Testis (tissue), 5 donors: ENCODE measurements at regions of chr6 and their contacts with region 1.

Region 1: DNA sequence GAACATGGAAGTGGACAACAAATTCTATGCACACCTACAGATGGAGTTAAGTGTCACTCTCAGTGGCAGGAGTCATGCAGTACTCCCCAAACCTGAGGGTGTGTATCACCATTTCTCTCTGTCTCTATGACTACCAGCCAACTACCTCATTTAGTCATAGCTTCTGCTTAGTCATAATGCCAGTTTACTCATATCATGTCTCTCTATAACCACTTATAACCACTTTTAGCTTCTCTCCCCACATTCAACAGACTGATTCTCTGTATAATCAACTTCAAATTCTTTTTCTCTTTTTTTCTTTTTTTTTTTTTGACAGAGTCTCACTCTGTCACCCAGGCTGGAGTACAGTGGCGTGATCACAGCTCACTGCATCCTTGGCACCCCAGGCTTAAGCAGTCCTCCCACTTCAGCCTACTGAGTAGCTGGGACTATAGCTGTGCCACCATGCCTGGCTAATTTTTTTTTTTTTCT is 13.8 kb upstream of the GTF3C6 start:
- DNase-seq: no peak
- H3K4me3 ChIP-seq: no peak overlapping the region
- H3K27ac ChIP-seq: no peak overlapping the region
- H3K4me1 ChIP-seq: no peaks in the 10 kb centered on the region
- H3K27me3 ChIP-seq: no peaks in the 10 kb centered on the region
- CTCF ChIP-seq: no peak
- POLR2A ChIP-seq: no peak

Region 2: GRCh38 chr6:110528101-110528929 is 416.4 kb before region 1 on chr6:
- intact Hi-C with region 1: loop called (anchors 10 kb)
- DNase-seq: peak; percentile 80
- H3K4me3 ChIP-seq: no peak overlapping the region
- H3K27ac ChIP-seq: no peak overlapping the region
- H3K4me1 ChIP-seq: no peaks in the 10 kb centered on the region
- H3K27me3 ChIP-seq: no peaks in the 10 kb centered on the region
- CTCF ChIP-seq: peak; percentile 67 to 77 (median 73)
- POLR2A ChIP-seq: no peak

Region 3: DNA sequence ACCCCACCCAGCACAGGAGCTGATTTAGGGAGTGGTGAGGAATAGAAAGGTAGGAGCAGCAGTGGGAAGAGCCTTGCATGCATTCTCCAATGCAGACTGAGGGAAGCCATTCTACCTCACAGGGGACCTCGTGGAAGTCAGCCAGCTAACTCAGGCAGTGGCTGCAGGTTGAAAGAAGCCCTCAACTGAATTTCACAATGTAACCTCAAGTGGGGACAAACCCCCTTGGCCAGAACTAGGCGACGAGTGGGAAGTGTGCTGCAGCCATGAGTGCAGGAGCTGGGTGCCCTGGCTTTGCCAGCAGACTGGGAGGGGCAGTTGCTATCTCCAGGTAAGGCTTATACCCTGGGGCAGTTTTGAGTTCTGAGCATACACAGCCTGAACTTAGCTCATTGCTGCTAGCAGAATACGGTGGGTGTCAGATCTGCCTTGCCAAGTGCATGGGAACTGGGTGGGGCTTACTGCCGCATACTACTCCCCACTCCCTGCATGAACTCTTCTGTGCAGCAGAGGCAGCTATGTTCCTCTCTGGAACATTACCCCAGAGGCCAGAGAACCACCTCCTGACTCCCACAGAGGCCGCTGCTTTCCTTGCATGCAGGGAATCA is 256.0 kb before region 1 on chr6:
- intact Hi-C with region 1: loop called (anchors 5 kb)
- DNase-seq: no peak
- H3K4me3 ChIP-seq: no peak overlapping the region
- H3K27ac ChIP-seq: no peak overlapping the region
- H3K4me1 ChIP-seq: peaks cover 7% of the 10 kb centered on the region
- H3K27me3 ChIP-seq: no peaks in the 10 kb centered on the region
- CTCF ChIP-seq: no peak
- POLR2A ChIP-seq: no peak

Region 4: GRCh38 chr6:110882824-110883554 is 61.7 kb before region 1 on chr6:
- intact Hi-C with region 1: no loop called
- DNase-seq: no peak
- H3K4me3 ChIP-seq: no peak overlapping the region
- H3K27ac ChIP-seq: no peak overlapping the region
- H3K4me1 ChIP-seq: peaks cover 57% of the 10 kb centered on the region
- H3K27me3 ChIP-seq: no peaks in the 10 kb centered on the region
- CTCF ChIP-seq: no peak
- POLR2A ChIP-seq: no peak

Region 5: GRCh38 chr6:111200350-111201243 is 255.9 kb after region 1 on chr6:
- intact Hi-C with region 1: no loop called
- DNase-seq: no peak
- H3K4me3 ChIP-seq: no peak overlapping the region
- H3K27ac ChIP-seq: no peak overlapping the region
- H3K4me1 ChIP-seq: no peaks in the 10 kb centered on the region
- H3K27me3 ChIP-seq: no peaks in the 10 kb centered on the region
- CTCF ChIP-seq: no peak
- POLR2A ChIP-seq: no peak